HCT116 (cell line): ENCODE measurements at regions of chr2 and their contacts with region 1.

Region 1: DNA sequence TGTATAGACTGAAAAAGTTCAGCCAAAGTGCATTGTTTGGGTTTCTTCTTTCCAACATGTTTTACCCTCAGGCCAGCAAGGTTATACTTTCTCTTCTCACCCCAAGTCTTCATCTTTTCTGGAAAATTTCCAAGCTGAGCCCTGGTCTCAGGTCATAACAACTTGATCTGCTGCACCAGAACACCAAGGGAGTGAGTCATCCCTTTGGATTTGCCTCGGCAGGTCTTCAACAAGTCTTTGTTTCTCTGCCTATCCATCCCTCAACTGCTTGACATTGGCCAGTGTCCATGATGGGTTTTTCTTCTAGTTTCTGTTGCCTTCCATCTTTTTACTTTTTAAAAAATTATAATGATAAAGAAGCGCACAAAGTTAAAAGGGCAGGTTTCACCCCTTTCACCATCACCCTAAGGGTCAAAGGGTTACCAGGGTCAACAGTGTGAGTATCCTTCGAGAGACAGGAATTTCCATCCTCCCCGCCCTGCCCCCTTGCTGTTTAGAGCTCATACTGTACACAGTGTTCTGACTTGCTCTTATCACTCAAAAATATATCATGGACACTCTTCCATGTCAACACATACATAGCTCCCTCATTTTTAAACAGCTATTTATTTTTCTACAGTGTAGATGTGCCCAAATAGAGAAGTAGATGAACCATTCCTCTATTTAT is 5.7 kb upstream of the SPATS2L start:
- DNase-seq: peak; percentile 68
- ATAC-seq: peak; percentile 67
- H3K4me3 ChIP-seq: peak overlapping the region in 1 of 2 experiments; percentile 28; a peak in 1 of 4 replicates
- H3K27ac ChIP-seq: peak overlapping the region; percentile 75; the same call in 1 of the 2 replicates
- H3K4me1 ChIP-seq: peaks cover 37 to 57% of the 10 kb centered on the region in 2 experiments
- H3K27me3 ChIP-seq: no peaks in the 10 kb centered on the region
- CTCF ChIP-seq: 0 out of 6 replicates have a peak, but pooled peaks of 2 of the 3 experiments have one; percentile 12 to 14
- POLR2A ChIP-seq: no peak
- RAD21 ChIP-seq: peak; percentile 11; the same call in 1 of the 2 replicates

Region 2: DNA sequence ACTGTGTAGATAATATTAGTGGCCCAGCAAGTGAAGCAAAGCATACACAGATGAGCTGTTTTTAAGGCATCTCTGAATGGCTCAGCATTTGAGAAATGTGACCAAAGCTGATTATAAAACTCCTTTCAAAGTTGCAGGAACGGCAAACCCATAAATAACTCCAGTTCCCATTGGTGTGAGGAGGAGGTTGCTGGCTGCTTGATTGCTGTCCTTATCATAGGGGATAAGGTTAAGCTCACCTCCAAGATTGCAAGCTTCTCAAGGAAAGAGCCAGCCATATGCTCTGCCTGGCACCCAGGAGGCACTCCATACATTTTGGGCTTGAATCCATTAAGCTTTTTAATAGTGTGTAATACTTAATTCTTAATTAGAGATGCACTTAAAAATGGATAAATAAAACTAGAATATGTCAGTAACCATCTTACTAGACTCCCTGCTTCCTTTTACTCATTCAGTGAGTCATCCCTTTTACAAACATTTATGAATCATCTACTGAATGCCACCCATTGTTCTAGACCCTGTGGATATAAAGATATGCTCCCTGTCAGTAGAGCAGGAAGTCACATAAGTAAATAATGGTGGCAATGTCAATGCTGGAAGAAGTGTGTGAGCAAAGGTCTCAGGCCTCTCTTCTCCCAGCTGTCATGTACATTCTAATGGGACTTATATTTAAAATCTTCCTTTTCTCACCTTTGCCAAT is 105.0 kb after region 1 on chr2:
- CTCF ChIA-PET with region 1: no interaction called
- POLR2A ChIA-PET with region 1: interaction called, 6 read pairs
- RAD21 ChIA-PET with region 1: interaction called in 1 of 2 experiments, 4 read pairs
- intact Hi-C with region 1: loop called (anchors 2 kb)
- DNase-seq: peak; percentile 93
- ATAC-seq: peak; percentile 73
- H3K4me3 ChIP-seq: peak overlapping the region; percentile 19 to 42; a peak in 3 of 4 replicates
- H3K27ac ChIP-seq: peak overlapping the region; percentile 93
- H3K4me1 ChIP-seq: peaks cover 66 to 89% of the 10 kb centered on the region in 2 experiments
- H3K27me3 ChIP-seq: no peaks in the 10 kb centered on the region
- CTCF ChIP-seq: no peak
- POLR2A ChIP-seq: no peak
- RAD21 ChIP-seq: peak; percentile 26; the same call in 1 of the 2 replicates